ENCODE measurements at regions of chr11 and their contacts with region 1.

Region 1: GRCh38 chr11:108697872-108698473 is 33.1 kb downstream of the DDX10 start:
- DNase-seq: peak; percentile 54
- ATAC-seq: peak; percentile 92
- H3K4me3 ChIP-seq: no peak overlapping the region
- H3K27ac ChIP-seq: no peak overlapping the region
- H3K4me1 ChIP-seq: no peaks in the 10 kb centered on the region
- H3K27me3 ChIP-seq: no peaks in the 10 kb centered on the region
- CTCF ChIP-seq: peak; percentile 80
- EP300 ChIP-seq: no peak
- POLR2A ChIP-seq: no peak
- RAD21 ChIP-seq: peak; percentile 61; the same call in 1 of the 2 replicates

Region 2: GRCh38 chr11:108718466-108718865 is 20.5 kb after region 1 on chr11:
- CTCF ChIA-PET with region 1: no interaction called
- POLR2A ChIA-PET with region 1: no interaction called
- in situ Hi-C with region 1: no loop called
- intact Hi-C with region 1: no loop called
- DNase-seq: no peak
- ATAC-seq: no peak
- H3K4me3 ChIP-seq: no peak overlapping the region
- H3K27ac ChIP-seq: no peak overlapping the region
- H3K4me1 ChIP-seq: peaks cover 19% of the 10 kb centered on the region
- H3K27me3 ChIP-seq: no peaks in the 10 kb centered on the region
- CTCF ChIP-seq: no peak
- EP300 ChIP-seq: no peak
- POLR2A ChIP-seq: no peak
- RAD21 ChIP-seq: no peak

Region 3: DNA sequence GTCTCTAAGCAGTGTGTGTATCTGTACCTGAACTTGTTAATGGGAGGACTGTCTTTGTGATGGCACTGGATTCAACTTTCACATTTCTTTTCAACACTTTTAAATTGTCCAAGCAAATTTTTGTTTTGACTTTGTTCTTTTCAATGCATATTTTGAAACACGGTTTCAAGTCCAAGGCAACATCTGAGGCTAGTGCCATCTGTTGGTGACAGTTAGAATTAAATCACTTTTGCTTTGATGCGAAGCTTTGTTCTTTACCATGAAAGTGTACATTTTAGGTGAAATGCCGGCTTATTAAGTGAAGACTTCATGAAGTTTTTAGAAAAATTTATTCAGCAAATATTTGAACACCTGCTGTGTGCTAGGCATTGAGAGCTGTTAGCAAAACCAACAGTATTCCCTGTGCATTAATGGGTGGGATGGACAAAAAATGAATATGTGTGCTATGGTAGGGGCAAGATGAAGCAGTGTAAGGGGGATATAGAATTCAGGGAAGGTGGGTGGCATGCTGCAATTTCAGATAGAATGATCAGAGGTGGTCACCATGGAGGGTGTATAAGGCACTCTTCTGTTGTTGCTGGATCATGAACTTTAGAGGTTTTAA is 37.1 kb after region 1 on chr11:
- CTCF ChIA-PET with region 1: interaction called, 5 read pairs
- POLR2A ChIA-PET with region 1: no interaction called
- in situ Hi-C with region 1: no loop called
- intact Hi-C with region 1: loop called (anchors 1 kb)
- DNase-seq: peak; percentile 21
- ATAC-seq: no peak; the same call in 2 of the 3 replicates
- H3K4me3 ChIP-seq: no peak overlapping the region
- H3K27ac ChIP-seq: no peak overlapping the region
- H3K4me1 ChIP-seq: peaks cover 5% of the 10 kb centered on the region; the same call in 1 of the 2 replicates
- H3K27me3 ChIP-seq: no peaks in the 10 kb centered on the region
- CTCF ChIP-seq: peak; percentile 37
- EP300 ChIP-seq: no peak
- POLR2A ChIP-seq: no peak
- RAD21 ChIP-seq: no peak

Region 4: DNA sequence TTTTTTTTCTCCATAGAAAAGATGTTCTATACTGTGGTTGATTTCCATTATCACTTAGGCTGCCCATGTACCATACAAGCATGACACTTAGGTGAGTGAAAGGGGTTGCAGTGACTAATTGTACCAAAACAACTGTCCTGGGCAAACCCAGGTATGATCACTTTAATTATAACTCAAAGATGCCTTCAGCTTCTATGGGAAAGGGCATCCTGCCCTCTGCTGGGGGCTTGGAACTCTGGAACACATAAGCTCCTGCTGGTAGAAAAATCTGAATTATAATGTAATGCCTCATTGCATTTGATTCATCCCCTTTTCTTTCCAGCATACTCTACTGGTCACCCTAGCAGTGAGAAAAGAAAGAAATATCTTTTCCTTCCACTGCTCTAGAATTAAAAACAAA is 173.2 kb after region 1 on chr11:
- CTCF ChIA-PET with region 1: interaction called, 10 read pairs
- POLR2A ChIA-PET with region 1: no interaction called
- in situ Hi-C with region 1: loop called (anchors 5 kb)
- intact Hi-C with region 1: loop called (anchors 1 kb)
- DNase-seq: peak; percentile 35
- ATAC-seq: peak; percentile 81
- H3K4me3 ChIP-seq: no peak overlapping the region
- H3K27ac ChIP-seq: peak overlapping the region; percentile 43
- H3K4me1 ChIP-seq: peaks cover 11% of the 10 kb centered on the region
- H3K27me3 ChIP-seq: no peaks in the 10 kb centered on the region
- CTCF ChIP-seq: peak; percentile 51
- EP300 ChIP-seq: no peak
- POLR2A ChIP-seq: no peak
- RAD21 ChIP-seq: peak; percentile 43; the same call in 1 of the 2 replicates

Region 5: GRCh38 chr11:109946322-109946846 is 1248.4 kb after region 1 on chr11:
- CTCF ChIA-PET with region 1: no interaction called
- POLR2A ChIA-PET with region 1: no interaction called
- in situ Hi-C with region 1: loop called (anchors 25 kb)
- intact Hi-C with region 1: no loop called
- DNase-seq: peak; percentile 78
- ATAC-seq: peak; percentile 100
- H3K4me3 ChIP-seq: peak overlapping the region; percentile 35 to 47 (median 44); a peak in 4 of 6 replicates
- H3K27ac ChIP-seq: no peak overlapping the region
- H3K4me1 ChIP-seq: 0 out of 2 replicates have a peak, but pooled peaks cover 12% of the 10 kb centered on the region
- H3K27me3 ChIP-seq: no peaks in the 10 kb centered on the region; a peak in 2 of 5 replicates
- CTCF ChIP-seq: peak; percentile 83
- EP300 ChIP-seq: 0 out of 4 replicates have a peak, but pooled peaks of 1 of the 2 experiments have one; percentile 7
- POLR2A ChIP-seq: no peak
- RAD21 ChIP-seq: peak; percentile 51; the same call in 1 of the 2 replicates